HCT116 (cell line): ENCODE measurements at regions of chr5 and their contacts with region 1.

Region 1: DNA sequence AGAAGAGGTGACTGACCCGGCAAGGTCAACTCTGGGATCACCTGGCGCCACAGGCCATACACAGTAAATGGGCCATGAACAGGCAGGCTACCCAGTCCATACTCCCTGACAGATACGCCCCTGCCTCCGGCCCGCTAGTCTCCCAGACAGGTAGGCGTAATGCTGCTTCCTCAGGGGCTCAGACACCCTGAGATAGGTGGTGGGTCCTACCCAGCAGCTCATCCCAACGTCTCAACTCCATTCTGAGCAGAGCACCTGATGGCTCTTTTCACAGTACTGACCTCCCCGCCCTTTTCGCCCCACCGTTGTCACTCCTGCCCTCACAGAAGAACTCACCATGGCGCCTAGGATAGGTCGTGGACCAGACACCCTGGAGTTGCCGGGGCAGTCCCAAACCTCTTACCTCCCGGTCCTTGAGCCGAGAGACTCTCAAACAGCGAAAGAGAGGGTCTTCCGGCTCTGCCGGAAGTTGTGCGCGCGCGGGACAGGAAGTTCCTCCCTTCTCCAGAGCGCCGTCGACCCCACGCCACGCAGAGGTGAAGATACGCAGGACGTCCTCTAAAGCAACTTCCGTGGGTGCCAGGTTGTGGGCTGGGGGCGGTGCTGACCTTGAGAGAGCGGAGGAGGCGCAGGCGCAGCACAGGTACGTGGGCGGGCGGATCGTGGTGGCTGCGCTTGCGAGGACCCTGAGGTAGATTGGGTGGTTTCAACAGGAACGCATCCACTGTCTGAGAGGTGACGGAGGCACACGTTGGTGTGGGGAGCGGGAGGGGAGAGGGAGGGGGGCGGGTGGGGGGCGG is at the start of gene TMEM161B:
- DNase-seq: peak; percentile 94
- ATAC-seq: peak; percentile 98
- H3K4me3 ChIP-seq: peak within 1 kb of the TSS; percentile 82 to 99
- H3K27ac ChIP-seq: peak within 1 kb of the TSS; percentile 71
- H3K4me1 ChIP-seq: peaks cover 12 to 14% of the 10 kb centered on the region in 2 experiments; a peak in 3 of 4 replicates
- H3K27me3 ChIP-seq: no peaks in the 10 kb centered on the region
- CTCF ChIP-seq: no peak
- POLR2A ChIP-seq: peak; percentile 83
- RAD21 ChIP-seq: no peak
- total RNA-seq, gene TMEM161B: 22.1 TPM

Region 2: DNA sequence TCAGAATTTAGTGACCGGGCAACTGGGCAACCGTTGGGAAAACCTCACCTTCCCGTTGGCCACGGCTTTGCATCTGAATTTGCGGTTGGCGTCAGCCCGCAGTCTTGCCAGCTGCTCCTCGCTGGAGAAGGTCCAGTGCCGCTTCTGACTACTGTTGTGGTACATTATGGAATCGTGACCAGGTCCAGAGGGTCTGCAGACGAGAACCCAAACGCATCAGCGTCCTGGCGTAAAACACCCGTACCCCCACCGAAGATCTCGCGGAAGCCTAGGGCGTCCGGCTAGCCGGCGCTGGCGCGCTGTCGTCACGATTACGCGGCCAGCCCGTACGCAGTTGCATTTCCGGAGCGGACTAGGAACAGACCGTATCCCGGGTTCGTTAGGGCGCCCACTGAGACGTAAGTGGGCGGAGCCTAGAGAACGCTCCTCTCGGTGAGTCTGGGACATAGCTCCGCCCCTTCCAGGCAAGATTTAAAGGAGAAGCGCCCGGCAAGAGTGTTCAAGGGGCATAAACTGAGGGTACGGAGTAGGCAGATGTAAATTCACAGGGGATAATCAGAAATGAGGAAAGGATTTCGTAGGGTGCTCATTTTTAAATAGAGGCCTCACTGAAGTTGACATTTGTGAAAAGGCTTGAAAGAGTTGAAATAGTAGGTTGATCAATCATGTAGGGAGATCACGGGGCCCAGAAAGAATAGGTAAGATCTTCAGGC is 855.8 kb before region 1 on chr5 and contains the start of gene CCNH:
- CTCF ChIA-PET with region 1: no interaction called
- POLR2A ChIA-PET with region 1: no interaction called
- RAD21 ChIA-PET with region 1: no interaction called
- intact Hi-C with region 1: loop called (anchors 10 kb)
- DNase-seq: peak; percentile 96
- ATAC-seq: peak; percentile 99
- H3K4me3 ChIP-seq: peak within 1 kb of the TSS; percentile 82 to 99
- H3K27ac ChIP-seq: peak within 1 kb of the TSS; percentile 76
- H3K4me1 ChIP-seq: peaks cover 4 to 9% of the 10 kb centered on the region in 2 experiments; a peak in 3 of 4 replicates
- H3K27me3 ChIP-seq: no peaks in the 10 kb centered on the region
- CTCF ChIP-seq: no peak
- POLR2A ChIP-seq: peak; percentile 90
- RAD21 ChIP-seq: no peak; the same call in 1 of the 2 replicates
- total RNA-seq, gene CCNH: 63.2 TPM

Region 3: GRCh38 chr5:88140856-88141752 is 127.5 kb before region 1 on chr5:
- CTCF ChIA-PET with region 1: no interaction called
- POLR2A ChIA-PET with region 1: no interaction called
- RAD21 ChIA-PET with region 1: no interaction called
- intact Hi-C with region 1: loop called (anchors 5 kb)
- DNase-seq: peak; percentile 93
- ATAC-seq: peak; percentile 95
- H3K4me3 ChIP-seq: peak overlapping the region; percentile 54 to 63
- H3K27ac ChIP-seq: no peak overlapping the region
- H3K4me1 ChIP-seq: peaks cover 5 to 19% of the 10 kb centered on the region in 2 experiments; a peak in 3 of 4 replicates
- H3K27me3 ChIP-seq: no peaks in the 10 kb centered on the region
- CTCF ChIP-seq: peak; percentile 22 to 68 (median 51); a peak in 4 of 6 replicates
- POLR2A ChIP-seq: no peak
- RAD21 ChIP-seq: peak; percentile 56

Region 4: DNA sequence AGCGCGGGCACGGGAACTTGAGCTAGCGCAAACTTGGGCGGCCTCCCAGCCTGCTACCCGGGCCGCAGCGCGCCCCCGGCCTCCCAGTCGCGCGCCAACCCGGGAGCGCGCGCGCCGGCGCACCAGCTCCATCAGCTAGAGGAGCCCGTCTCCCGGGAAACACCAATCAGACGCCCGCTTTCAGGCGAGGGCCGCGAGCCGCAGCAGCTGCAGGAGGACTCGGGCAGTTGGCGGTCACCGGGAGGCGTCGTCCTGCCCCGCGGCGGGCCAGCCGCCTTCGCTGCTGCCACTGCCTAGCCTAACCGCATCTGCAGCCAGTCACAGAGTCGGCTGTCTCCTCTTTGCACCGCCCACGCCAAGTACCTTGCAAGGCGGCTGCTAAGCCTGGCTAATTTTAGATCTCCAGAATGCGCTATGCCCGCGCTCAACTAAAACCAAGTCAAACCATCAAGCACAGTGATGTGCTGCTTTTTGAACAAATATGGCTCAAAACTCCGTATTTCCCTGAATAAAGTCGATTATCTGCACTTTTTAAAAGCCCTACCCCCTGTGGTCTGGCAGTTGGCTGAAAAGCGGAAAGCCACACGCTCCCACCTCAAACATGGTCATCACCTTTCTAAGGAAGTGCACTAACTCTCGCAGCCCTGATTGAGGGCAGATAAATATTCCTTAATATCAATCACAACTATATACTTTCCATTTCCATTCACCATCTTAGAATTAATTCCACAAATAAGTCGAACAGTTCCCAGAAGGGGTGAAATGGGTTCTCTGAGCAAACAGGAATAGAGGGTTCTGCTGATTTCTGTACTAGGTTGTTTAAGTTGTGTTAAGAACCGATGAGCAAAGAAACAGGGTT is 392.6 kb after region 1 on chr5:
- CTCF ChIA-PET with region 1: no interaction called
- POLR2A ChIA-PET with region 1: no interaction called
- RAD21 ChIA-PET with region 1: no interaction called
- intact Hi-C with region 1: loop called (anchors 10 kb)
- DNase-seq: peak; percentile 68
- ATAC-seq: peak; percentile 95
- H3K4me3 ChIP-seq: peak overlapping the region; percentile 42 to 50
- H3K27ac ChIP-seq: no peak overlapping the region
- H3K4me1 ChIP-seq: peaks cover 0 to 12% of the 10 kb centered on the region in 2 experiments; a peak in 2 of 4 replicates
- H3K27me3 ChIP-seq: no peaks in the 10 kb centered on the region
- CTCF ChIP-seq: no peak
- POLR2A ChIP-seq: no peak
- RAD21 ChIP-seq: no peak

Region 5: DNA sequence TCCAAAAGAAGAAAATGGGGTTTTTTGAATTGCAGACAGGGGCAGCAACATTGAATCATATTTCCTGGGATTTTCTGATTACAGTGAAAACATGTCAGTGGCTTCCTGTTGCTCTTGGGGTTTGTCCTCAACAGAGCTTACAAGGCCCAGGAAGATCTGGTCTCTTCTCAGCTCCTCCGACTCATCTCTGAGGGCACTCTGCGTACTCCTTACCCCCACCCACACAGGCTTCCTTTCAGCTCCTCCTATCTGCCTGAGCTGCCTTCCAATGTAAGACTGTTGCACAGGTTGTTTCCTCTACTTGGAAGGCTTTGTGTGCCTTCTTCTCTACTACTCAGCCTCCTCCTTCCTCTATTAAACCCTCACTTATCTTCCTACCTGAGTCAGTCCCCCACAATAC is 859.5 kb after region 1 on chr5:
- CTCF ChIA-PET with region 1: no interaction called
- POLR2A ChIA-PET with region 1: no interaction called
- RAD21 ChIA-PET with region 1: no interaction called
- intact Hi-C with region 1: no loop called
- DNase-seq: no peak
- ATAC-seq: no peak
- H3K4me3 ChIP-seq: no peak overlapping the region
- H3K27ac ChIP-seq: no peak overlapping the region
- H3K4me1 ChIP-seq: no peaks in the 10 kb centered on the region
- H3K27me3 ChIP-seq: no peaks in the 10 kb centered on the region
- CTCF ChIP-seq: no peak
- POLR2A ChIP-seq: no peak
- RAD21 ChIP-seq: no peak